ENCODE measurements at regions of chr12 and their contacts with region 1.

Region 1: GRCh38 chr12:110431957-110432587 is 18.1 kb downstream of the ARPC3 start:
- DNase-seq: no peak
- ATAC-seq: no peak
- H3K4me3 ChIP-seq: peak overlapping the region; percentile 49 to 50
- H3K27ac ChIP-seq: no peak overlapping the region; the same call in 1 of the 2 replicates
- H3K4me1 ChIP-seq: no peaks in the 10 kb centered on the region; the same call in 1 of the 2 replicates
- H3K27me3 ChIP-seq: no peaks in the 10 kb centered on the region
- CTCF ChIP-seq: no peak

Region 2: DNA sequence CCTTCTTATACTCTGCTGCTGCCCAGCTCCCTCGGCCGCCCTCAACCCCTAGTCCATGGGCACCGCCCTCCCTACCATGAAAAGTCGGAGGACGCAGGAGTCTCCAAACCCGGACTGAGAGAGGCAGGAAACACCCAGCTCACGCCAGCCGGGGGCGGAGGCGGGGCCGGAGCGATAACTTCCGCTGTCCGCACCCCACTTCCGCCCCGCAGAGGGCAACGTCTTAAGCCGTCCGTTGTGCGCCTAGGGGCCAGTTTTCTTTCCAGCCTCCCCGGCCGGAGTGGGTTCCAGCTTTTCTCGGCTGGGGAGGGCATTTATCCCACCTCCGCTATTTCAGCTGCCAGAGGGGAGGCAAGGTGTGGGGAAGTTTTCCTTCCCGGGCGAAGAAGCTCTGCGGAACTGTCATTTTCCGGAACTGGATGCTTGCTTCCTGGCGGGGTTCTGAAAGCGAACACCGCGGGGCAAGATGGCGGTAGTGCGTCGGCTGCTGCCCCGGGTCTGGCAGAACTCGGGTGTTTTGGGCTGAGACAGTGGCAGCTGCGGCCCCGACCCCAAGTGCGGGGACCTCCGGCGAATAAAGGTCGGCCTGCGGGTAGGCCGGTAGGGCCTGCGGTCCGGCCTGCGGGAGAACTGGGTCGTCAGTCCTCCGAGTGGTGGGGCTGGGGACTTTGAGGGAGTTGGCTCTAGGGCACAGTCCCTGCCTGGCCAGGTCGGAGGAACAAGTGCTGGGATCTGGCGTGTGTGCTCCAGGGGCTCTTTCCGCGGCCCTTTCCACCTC is 954.7 kb before region 1 on chr12 and contains the starts of genes KCTD10 and UBE3B:
- CTCF ChIA-PET with region 1: interaction called, 14 read pairs
- POLR2A ChIA-PET with region 1: no interaction called
- in situ Hi-C with region 1: no loop called
- intact Hi-C with region 1: no loop called
- DNase-seq: peak; percentile 22
- ATAC-seq: peak; percentile 99
- H3K4me3 ChIP-seq: peak within 1 kb of the TSS; percentile 85 to 93
- H3K27ac ChIP-seq: peak within 1 kb of the TSS; percentile 95
- H3K4me1 ChIP-seq: peaks cover 21% of the 10 kb centered on the region
- H3K27me3 ChIP-seq: no peaks in the 10 kb centered on the region
- CTCF ChIP-seq: no peak
- total RNA-seq, gene KCTD10: 55.2 TPM
- total RNA-seq, gene UBE3B: 38.9 TPM

Region 3: GRCh38 chr12:110100315-110100970 is 331.6 kb before region 1 on chr12:
- CTCF ChIA-PET with region 1: interaction called, 13 read pairs
- POLR2A ChIA-PET with region 1: no interaction called
- in situ Hi-C with region 1: no loop called
- intact Hi-C with region 1: no loop called
- DNase-seq: peak; percentile 53
- ATAC-seq: peak; percentile 84
- H3K4me3 ChIP-seq: no peak overlapping the region
- H3K27ac ChIP-seq: no peak overlapping the region
- H3K4me1 ChIP-seq: peaks cover 6% of the 10 kb centered on the region
- H3K27me3 ChIP-seq: no peaks in the 10 kb centered on the region
- CTCF ChIP-seq: peak; percentile 92

Region 4: GRCh38 chr12:110245369-110245772 is 186.7 kb before region 1 on chr12:
- CTCF ChIA-PET with region 1: no interaction called
- POLR2A ChIA-PET with region 1: no interaction called
- in situ Hi-C with region 1: no loop called
- intact Hi-C with region 1: no loop called
- DNase-seq: no peak
- ATAC-seq: peak; percentile 74
- H3K4me3 ChIP-seq: no peak overlapping the region
- H3K27ac ChIP-seq: no peak overlapping the region
- H3K4me1 ChIP-seq: no peaks in the 10 kb centered on the region
- H3K27me3 ChIP-seq: no peaks in the 10 kb centered on the region
- CTCF ChIP-seq: no peak; the same call in 1 of the 2 replicates

Region 5: DNA sequence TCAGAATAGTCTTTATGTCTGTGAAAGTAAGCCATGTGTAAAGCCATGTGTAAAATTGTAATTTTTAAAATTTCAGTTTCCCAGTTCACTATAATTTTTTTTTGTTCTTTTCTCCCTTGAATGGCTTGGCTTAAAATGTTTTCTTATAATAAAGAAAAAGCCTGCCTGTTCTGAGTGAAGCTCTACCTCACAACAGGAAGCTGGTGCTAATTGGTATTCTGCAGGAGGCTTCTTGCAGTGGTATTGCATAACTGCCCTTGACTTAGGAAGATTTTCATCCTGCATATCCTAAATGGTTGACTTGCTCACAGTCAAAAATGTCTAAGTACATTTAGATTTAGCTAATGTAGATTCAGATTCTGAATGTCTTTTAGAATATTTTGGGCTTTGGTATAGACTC is 101.5 kb before region 1 on chr12:
- CTCF ChIA-PET with region 1: interaction called, 15 read pairs
- POLR2A ChIA-PET with region 1: no interaction called
- in situ Hi-C with region 1: no loop called
- intact Hi-C with region 1: no loop called
- DNase-seq: no peak
- ATAC-seq: no peak
- H3K4me3 ChIP-seq: no peak overlapping the region
- H3K27ac ChIP-seq: no peak overlapping the region
- H3K4me1 ChIP-seq: no peaks in the 10 kb centered on the region
- H3K27me3 ChIP-seq: no peaks in the 10 kb centered on the region
- CTCF ChIP-seq: no peak

Region 6: GRCh38 chr12:110355073-110355472 is 77.0 kb before region 1 on chr12:
- CTCF ChIA-PET with region 1: interaction called, 5 read pairs
- POLR2A ChIA-PET with region 1: interaction called, 4 read pairs
- in situ Hi-C with region 1: no loop called
- intact Hi-C with region 1: loop called (anchors 10 kb)
- DNase-seq: peak; percentile 13
- ATAC-seq: peak; percentile 82
- H3K4me3 ChIP-seq: no peak overlapping the region
- H3K27ac ChIP-seq: no peak overlapping the region
- H3K4me1 ChIP-seq: no peaks in the 10 kb centered on the region
- H3K27me3 ChIP-seq: no peaks in the 10 kb centered on the region
- CTCF ChIP-seq: peak; percentile 77

Region 7: DNA sequence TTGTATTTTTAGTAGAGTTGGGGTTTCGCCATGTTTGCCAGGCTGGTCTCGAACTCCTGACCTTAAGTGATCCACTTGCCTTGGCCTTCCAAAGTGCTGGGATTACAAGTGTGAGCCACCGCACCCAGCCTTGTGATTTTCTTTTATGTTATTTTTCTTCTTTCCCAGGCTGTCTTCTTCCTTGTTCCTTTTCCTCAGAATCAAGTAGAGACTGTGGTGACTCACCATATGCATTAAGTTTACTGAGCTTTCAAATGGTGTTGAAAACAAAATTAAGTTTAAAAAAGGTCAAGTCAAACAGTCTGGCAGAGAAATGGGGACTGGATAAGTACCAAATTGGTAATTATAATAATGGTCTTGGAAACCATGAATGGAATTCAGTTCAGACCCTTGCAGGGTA is 12.4 kb after region 1 on chr12:
- CTCF ChIA-PET with region 1: interaction called, 19 read pairs
- POLR2A ChIA-PET with region 1: no interaction called
- in situ Hi-C with region 1: no loop called
- intact Hi-C with region 1: no loop called
- DNase-seq: no peak
- ATAC-seq: no peak
- H3K4me3 ChIP-seq: no peak overlapping the region
- H3K27ac ChIP-seq: no peak overlapping the region
- H3K4me1 ChIP-seq: peaks cover 6% of the 10 kb centered on the region; the same call in 1 of the 2 replicates
- H3K27me3 ChIP-seq: no peaks in the 10 kb centered on the region
- CTCF ChIP-seq: no peak

Region 8: GRCh38 chr12:110449799-110450497 is 17.9 kb after region 1 on chr12 and contains the start of gene ARPC3:
- CTCF ChIA-PET with region 1: interaction called, 10 read pairs
- POLR2A ChIA-PET with region 1: interaction called, 7 read pairs
- in situ Hi-C with region 1: no loop called
- intact Hi-C with region 1: no loop called
- DNase-seq: peak; percentile 67
- ATAC-seq: peak; percentile 99
- H3K4me3 ChIP-seq: peak within 1 kb of the TSS; percentile 77 to 97
- H3K27ac ChIP-seq: peak within 1 kb of the TSS; percentile 85
- H3K4me1 ChIP-seq: peaks cover 6% of the 10 kb centered on the region; the same call in 1 of the 2 replicates
- H3K27me3 ChIP-seq: no peaks in the 10 kb centered on the region
- CTCF ChIP-seq: peak; percentile 96
- total RNA-seq, gene ARPC3: 319 TPM

Region 9: GRCh38 chr12:110766311-110767154 is 334.5 kb after region 1 on chr12:
- CTCF ChIA-PET with region 1: no interaction called
- POLR2A ChIA-PET with region 1: no interaction called
- in situ Hi-C with region 1: no loop called
- intact Hi-C with region 1: no loop called
- DNase-seq: no peak
- ATAC-seq: no peak
- H3K4me3 ChIP-seq: no peak overlapping the region
- H3K27ac ChIP-seq: no peak overlapping the region
- H3K4me1 ChIP-seq: no peaks in the 10 kb centered on the region
- H3K27me3 ChIP-seq: no peaks in the 10 kb centered on the region
- CTCF ChIP-seq: no peak

Region 10: GRCh38 chr12:111056618-111057521 is 624.8 kb after region 1 on chr12:
- CTCF ChIA-PET with region 1: no interaction called
- POLR2A ChIA-PET with region 1: no interaction called
- in situ Hi-C with region 1: no loop called
- intact Hi-C with region 1: no loop called
- DNase-seq: no peak
- ATAC-seq: no peak
- H3K4me3 ChIP-seq: no peak overlapping the region
- H3K27ac ChIP-seq: no peak overlapping the region
- H3K4me1 ChIP-seq: no peaks in the 10 kb centered on the region
- H3K27me3 ChIP-seq: no peaks in the 10 kb centered on the region
- CTCF ChIP-seq: no peak

Measured in Panc1 (cell line).